Sciatic nerve (tissue), 2 donors: ENCODE measurements at regions of chr16 and their contacts with region 1.

Region 1: GRCh38 chr16:85569615-85570212 is 43.4 kb upstream of the GSE1 start:
- DNase-seq: no peak
- ATAC-seq: no peak

Region 2: GRCh38 chr16:84103678-84104077 is 1466.0 kb before region 1 on chr16:
- intact Hi-C with region 1: loop called (anchors 5 kb)
- DNase-seq: no peak
- ATAC-seq: no peak